Aorta (tissue), 5 donors: ENCODE measurements at regions of chr17 and their contacts with region 1.

Region 1: DNA sequence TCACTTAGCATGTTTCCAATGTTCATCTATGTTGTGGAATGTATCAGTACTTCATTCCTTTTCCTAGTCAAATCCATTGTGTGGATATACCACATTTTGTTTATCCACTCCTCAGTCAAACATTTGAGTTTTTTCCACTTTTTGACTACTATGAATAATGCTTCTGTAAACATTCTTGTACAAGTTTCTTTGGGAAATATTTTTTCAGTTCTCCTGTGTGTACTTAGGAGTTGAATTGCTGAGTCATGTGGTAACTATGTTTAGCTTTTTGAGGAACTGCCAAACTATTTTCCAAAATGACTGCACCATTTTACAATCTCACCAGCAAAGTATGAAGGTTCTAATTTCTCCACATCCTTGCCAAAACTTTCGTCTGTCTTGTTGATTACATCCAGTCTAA is 223.7 kb upstream of the AXIN2 start:
- DNase-seq: no peak
- ATAC-seq: peak; percentile 84
- H3K4me3 ChIP-seq: no peak overlapping the region
- H3K27ac ChIP-seq: no peak overlapping the region
- H3K4me1 ChIP-seq: peaks cover 0 to 4% of the 10 kb centered on the region in 2 donors
- H3K27me3 ChIP-seq: no peaks in the 10 kb centered on the region

Region 2: GRCh38 chr17:65561394-65562205 is 223.5 kb before region 1 on chr17 and contains the start of gene AXIN2:
- intact Hi-C with region 1: loop called (anchors 5 kb)
- DNase-seq: peak; percentile 94 to 95
- ATAC-seq: peak; percentile 88
- H3K4me3 ChIP-seq: peak within 1 kb of the TSS; percentile 42 to 99
- H3K27ac ChIP-seq: peak within 1 kb of the TSS; percentile 78 to 98
- H3K4me1 ChIP-seq: no peaks in the 10 kb centered on the region
- H3K27me3 ChIP-seq: no peaks in the 10 kb centered on the region
- total RNA-seq, gene AXIN2: 12.8 to 13.8 TPM

Region 3: GRCh38 chr17:65584604-65585541 is 200.2 kb before region 1 on chr17:
- intact Hi-C with region 1: no loop called
- DNase-seq: no peak
- ATAC-seq: peak; percentile 57
- H3K4me3 ChIP-seq: no peak overlapping the region
- H3K27ac ChIP-seq: peak overlapping the region; percentile 32 to 52
- H3K4me1 ChIP-seq: peaks cover 0 to 5% of the 10 kb centered on the region in 2 donors
- H3K27me3 ChIP-seq: no peaks in the 10 kb centered on the region